MCF 10A (cell line): ENCODE measurements at regions of chr12 and their contacts with region 1.

Region 1: GRCh38 chr12:95117178-95117599 is 43.8 kb upstream of the NR2C1 start:
- DNase-seq: peak; percentile 86
- H3K4me3 Mint-ChIP-seq: peak overlapping the region; percentile 38
- H3K27ac Mint-ChIP-seq: peak overlapping the region; percentile 78
- H3K4me1 Mint-ChIP-seq: peaks cover 28% of the 10 kb centered on the region
- H3K27me3 Mint-ChIP-seq: no peaks in the 10 kb centered on the region
- CTCF ChIP-seq: peak; percentile 48

Region 2: DNA sequence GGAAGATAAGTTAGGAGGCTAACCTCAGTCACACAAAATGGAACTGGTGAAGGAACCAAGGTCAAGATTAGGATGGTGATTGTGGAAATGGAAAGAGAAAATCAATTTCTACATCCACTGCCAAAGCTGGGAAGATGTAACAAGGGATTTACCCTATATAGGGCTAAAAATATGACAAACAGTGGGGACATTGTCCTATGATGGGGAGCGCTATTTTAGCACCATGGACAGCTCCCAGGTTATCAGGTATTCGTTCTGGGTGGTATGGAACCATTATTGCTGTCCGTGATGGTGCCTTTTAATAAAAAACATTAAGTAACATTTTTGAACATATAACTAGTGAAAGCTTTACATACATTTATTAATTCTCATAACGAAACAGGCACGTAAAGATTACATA is 237.6 kb before region 1 on chr12:
- CTCF ChIA-PET with region 1: no interaction called
- POLR2A ChIA-PET with region 1: no interaction called
- intact Hi-C with region 1: no loop called
- DNase-seq: peak; percentile 50
- H3K4me3 Mint-ChIP-seq: no peak overlapping the region
- H3K27ac Mint-ChIP-seq: no peak overlapping the region
- H3K4me1 Mint-ChIP-seq: peaks cover 9% of the 10 kb centered on the region
- H3K27me3 Mint-ChIP-seq: peaks cover 27% of the 10 kb centered on the region
- CTCF ChIP-seq: no peak

Region 3: GRCh38 chr12:95003213-95003920 is 113.8 kb before region 1 on chr12 and contains the start of gene NDUFA12:
- CTCF ChIA-PET with region 1: no interaction called
- POLR2A ChIA-PET with region 1: no interaction called
- intact Hi-C with region 1: no loop called
- DNase-seq: peak; percentile 96
- H3K4me3 Mint-ChIP-seq: peak within 1 kb of the TSS; percentile 94
- H3K27ac Mint-ChIP-seq: peak within 1 kb of the TSS; percentile 83
- H3K4me1 Mint-ChIP-seq: peaks cover 14% of the 10 kb centered on the region
- H3K27me3 Mint-ChIP-seq: no peaks in the 10 kb centered on the region
- CTCF ChIP-seq: no peak
- total RNA-seq, gene NDUFA12: 112 and 124 TPM in 2 replicates

Region 4: DNA sequence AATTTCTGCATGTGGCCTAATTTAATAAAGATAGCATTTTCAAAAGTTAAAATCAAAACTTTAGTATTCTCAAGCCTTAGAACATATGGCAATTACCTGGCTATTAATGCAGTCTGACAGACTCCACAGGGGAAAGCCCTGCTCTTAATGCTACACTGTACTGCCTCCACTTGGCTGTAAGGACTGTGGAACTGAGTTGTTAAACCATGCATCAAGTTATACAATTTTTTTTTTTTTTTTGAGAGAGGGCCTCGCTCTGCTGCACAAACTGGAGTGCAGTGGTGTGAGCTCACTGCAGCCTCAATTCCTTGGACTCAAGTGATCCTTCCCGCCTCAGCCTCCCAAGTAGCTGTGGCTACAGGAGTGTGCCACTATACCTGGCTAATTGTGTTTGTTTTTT is 94.7 kb before region 1 on chr12:
- CTCF ChIA-PET with region 1: no interaction called
- POLR2A ChIA-PET with region 1: no interaction called
- intact Hi-C with region 1: no loop called
- DNase-seq: no peak
- H3K4me3 Mint-ChIP-seq: no peak overlapping the region
- H3K27ac Mint-ChIP-seq: no peak overlapping the region
- H3K4me1 Mint-ChIP-seq: no peaks in the 10 kb centered on the region
- H3K27me3 Mint-ChIP-seq: no peaks in the 10 kb centered on the region
- CTCF ChIP-seq: no peak

Region 5: DNA sequence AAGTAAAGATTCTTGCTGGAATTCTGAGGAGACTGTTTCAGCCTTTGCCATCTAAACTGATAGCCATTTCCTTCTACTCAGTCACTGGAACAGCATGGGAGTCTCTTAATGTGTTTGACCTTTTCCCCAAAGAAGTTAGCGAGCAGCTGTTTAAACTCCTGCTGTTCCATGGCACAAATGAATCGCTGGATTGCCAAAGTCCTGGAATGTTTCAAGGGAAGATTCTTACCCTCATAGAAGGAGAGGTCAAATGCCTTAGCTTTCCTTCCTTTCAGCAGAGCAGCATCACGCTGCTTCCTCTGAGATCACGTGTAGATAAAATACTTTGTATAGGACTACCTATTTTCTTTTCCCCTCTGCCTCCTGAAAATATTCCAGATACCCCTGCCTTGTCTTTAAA is 33.3 kb before region 1 on chr12:
- CTCF ChIA-PET with region 1: interaction called, 13 read pairs
- POLR2A ChIA-PET with region 1: no interaction called
- intact Hi-C with region 1: no loop called
- DNase-seq: no peak
- H3K4me3 Mint-ChIP-seq: no peak overlapping the region
- H3K27ac Mint-ChIP-seq: no peak overlapping the region
- H3K4me1 Mint-ChIP-seq: peaks cover 6% of the 10 kb centered on the region
- H3K27me3 Mint-ChIP-seq: no peaks in the 10 kb centered on the region
- CTCF ChIP-seq: no peak

Region 6: GRCh38 chr12:95198914-95199313 is 81.7 kb after region 1 on chr12:
- CTCF ChIA-PET with region 1: interaction called, 4 read pairs
- POLR2A ChIA-PET with region 1: interaction called, 44 read pairs
- intact Hi-C with region 1: loop called (anchors 5 kb)
- DNase-seq: peak; percentile 45
- H3K4me3 Mint-ChIP-seq: peak overlapping the region; percentile 48
- H3K27ac Mint-ChIP-seq: peak overlapping the region; percentile 98
- H3K4me1 Mint-ChIP-seq: peaks cover 32% of the 10 kb centered on the region
- H3K27me3 Mint-ChIP-seq: no peaks in the 10 kb centered on the region
- CTCF ChIP-seq: no peak

Region 7: DNA sequence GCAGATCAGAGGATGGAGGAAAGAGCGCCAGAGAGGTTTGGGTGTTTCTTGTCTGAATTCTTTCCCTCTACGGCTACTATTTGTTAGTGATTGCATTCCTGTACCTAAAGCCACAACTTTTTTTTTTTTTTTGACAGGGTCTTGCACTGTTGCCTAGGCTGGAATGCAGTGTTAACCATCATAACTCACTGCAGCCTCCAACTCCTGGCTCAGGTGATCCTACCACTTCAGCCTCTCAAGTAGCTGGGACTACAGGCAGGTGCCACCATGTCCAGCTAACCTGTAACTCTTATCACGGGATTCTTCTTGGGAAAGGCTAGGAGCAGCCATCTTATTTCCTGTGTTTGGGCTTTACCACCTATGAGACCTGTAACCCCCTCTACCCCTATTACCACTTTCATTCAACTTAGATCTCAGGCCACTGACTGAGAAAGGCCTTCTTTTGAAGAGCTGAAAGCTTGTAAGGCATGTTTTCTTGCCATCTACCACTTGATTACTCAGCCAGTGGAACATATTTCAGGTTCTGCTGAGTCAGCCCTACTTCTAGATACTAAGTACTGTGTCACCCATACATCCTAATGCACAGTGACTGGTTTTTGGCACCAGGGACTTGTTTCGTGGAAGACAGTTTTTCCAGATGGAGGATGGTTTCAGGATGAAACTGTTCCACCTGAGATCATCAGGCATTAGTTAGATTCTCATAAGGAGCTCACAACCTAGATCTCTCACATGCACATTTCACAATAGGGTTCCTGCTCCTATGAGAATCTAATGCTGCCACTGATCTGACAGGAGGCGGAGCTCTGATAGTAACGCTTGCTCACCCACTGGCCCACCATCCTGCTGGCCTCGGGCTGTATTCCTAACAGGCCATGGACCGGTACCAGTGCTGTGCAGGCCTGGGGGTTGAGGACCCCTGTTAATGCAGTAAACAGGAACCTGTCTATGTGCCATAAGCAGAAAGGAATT is 107.3 kb after region 1 on chr12:
- CTCF ChIA-PET with region 1: interaction called, 10 read pairs
- POLR2A ChIA-PET with region 1: interaction called, 158 read pairs
- intact Hi-C with region 1: no loop called
- DNase-seq: peak; percentile 37
- H3K4me3 Mint-ChIP-seq: no peak overlapping the region
- H3K27ac Mint-ChIP-seq: peak overlapping the region; percentile 73
- H3K4me1 Mint-ChIP-seq: peaks cover 27% of the 10 kb centered on the region
- H3K27me3 Mint-ChIP-seq: no peaks in the 10 kb centered on the region
- CTCF ChIP-seq: no peak

Region 8: GRCh38 chr12:95336390-95337067 is 219.3 kb after region 1 on chr12:
- CTCF ChIA-PET with region 1: interaction called, 15 read pairs
- POLR2A ChIA-PET with region 1: interaction called, 3 read pairs
- intact Hi-C with region 1: loop called (anchors 1 kb)
- DNase-seq: peak; percentile 57
- H3K4me3 Mint-ChIP-seq: no peak overlapping the region
- H3K27ac Mint-ChIP-seq: no peak overlapping the region
- H3K4me1 Mint-ChIP-seq: peaks cover 6% of the 10 kb centered on the region
- H3K27me3 Mint-ChIP-seq: no peaks in the 10 kb centered on the region
- CTCF ChIP-seq: peak; percentile 71

Region 9: DNA sequence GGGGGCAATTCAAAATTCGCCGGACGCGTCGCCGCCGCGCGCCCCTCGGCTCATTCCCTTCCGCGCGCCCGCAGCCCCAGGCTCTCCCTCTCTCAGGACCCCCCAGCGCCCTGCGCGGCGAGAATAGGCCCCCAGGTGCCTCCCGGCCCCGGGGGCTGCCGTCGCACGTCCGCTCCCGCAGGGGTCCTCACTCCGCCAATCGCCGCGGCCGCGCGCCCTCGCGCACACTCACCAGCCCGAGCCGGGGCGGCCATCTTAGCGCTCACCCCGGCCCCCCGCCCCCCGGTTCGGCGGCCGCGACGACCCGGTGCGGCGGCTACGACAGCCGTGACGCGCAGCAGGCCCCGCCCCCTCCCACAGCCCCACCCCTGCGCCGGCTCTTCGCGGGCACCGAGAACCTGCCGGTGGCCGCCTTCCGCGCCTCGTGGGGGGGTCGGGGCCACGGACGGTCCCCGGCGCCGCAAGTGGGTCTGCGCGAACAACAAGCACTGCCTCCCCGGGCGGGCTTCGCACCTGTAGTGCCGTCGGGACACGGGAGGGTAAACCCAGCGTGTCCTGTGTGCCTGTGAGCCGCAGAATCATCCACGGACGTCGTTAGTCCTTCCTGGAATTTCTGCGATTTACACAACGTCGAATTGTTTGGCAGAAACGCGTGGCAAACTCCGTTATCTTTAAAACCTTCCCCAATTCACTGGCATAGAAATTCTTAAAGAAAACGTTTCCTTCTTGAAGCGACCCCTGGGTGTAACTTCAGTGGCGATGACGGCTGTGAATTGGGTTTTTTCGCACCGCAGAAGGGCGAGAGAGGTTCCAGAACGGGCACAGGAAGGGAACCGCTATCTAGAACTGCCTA is 431.6 kb after region 1 on chr12:
- CTCF ChIA-PET with region 1: no interaction called
- POLR2A ChIA-PET with region 1: no interaction called
- intact Hi-C with region 1: no loop called
- DNase-seq: no peak
- H3K4me3 Mint-ChIP-seq: no peak overlapping the region
- H3K27ac Mint-ChIP-seq: no peak overlapping the region
- H3K4me1 Mint-ChIP-seq: no peaks in the 10 kb centered on the region
- H3K27me3 Mint-ChIP-seq: no peaks in the 10 kb centered on the region
- CTCF ChIP-seq: no peak